B cell (primary cell): ENCODE measurements at regions of chr19 and their contacts with region 1.

Region 1: DNA sequence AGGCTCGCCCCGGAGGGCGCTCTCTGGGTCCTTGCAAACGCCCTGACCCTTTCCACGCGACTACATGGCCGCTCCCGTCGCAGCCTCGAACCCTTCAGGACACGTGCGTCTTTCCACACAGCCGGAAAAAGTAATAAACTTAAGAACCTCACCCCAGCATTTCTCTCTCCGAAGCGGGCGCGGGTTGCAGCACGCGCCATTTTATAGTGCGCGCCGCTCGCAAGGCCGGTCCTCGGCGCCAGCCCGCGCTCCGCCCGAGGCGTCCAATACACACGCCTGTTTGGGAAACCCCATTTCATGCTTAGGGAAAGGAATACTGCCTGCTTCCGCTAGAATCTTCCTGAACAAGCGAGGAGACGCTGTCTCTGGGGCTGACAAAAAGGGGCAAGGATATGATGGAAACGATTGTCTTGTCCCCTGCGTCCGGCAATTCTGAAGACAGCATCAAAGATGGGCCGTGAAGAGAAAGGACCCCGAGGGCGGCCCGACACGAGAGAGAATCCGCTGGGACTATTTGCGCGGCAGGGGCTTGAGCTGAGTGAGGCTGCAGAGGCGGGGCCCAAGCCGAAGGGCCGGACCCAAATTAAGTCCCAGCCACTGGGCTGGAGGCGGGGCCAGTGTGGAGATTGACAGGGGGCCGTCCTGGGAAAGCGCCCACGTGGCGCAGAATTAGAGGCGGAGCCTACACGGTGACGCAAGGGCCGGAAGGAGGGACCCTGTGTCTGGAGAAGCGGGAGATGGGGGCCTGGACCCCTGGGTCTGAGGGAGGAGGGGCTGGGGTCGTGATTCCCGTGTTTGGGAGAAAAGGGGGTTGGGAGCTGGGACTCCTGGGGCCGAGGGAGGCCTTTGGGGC is 14.4 kb downstream of the ACP4 start:
- DNase-seq: peak; percentile 99
- ATAC-seq: peak; percentile 98
- H3K4me3 ChIP-seq: peak overlapping the region; percentile 80 to 98 (median 88)
- H3K4me3 Mint-ChIP-seq: peak overlapping the region; percentile 94
- H3K27ac ChIP-seq: peak overlapping the region; percentile 99
- H3K27ac Mint-ChIP-seq: peak overlapping the region; percentile 100
- H3K4me1 ChIP-seq: peaks cover 18 to 24% of the 10 kb centered on the region in 2 donors
- H3K4me1 Mint-ChIP-seq: peaks cover 39% of the 10 kb centered on the region
- H3K27me3 ChIP-seq: no peaks in the 10 kb centered on the region
- H3K27me3 Mint-ChIP-seq: no peaks in the 10 kb centered on the region
- CTCF ChIP-seq: no peak

Region 2: DNA sequence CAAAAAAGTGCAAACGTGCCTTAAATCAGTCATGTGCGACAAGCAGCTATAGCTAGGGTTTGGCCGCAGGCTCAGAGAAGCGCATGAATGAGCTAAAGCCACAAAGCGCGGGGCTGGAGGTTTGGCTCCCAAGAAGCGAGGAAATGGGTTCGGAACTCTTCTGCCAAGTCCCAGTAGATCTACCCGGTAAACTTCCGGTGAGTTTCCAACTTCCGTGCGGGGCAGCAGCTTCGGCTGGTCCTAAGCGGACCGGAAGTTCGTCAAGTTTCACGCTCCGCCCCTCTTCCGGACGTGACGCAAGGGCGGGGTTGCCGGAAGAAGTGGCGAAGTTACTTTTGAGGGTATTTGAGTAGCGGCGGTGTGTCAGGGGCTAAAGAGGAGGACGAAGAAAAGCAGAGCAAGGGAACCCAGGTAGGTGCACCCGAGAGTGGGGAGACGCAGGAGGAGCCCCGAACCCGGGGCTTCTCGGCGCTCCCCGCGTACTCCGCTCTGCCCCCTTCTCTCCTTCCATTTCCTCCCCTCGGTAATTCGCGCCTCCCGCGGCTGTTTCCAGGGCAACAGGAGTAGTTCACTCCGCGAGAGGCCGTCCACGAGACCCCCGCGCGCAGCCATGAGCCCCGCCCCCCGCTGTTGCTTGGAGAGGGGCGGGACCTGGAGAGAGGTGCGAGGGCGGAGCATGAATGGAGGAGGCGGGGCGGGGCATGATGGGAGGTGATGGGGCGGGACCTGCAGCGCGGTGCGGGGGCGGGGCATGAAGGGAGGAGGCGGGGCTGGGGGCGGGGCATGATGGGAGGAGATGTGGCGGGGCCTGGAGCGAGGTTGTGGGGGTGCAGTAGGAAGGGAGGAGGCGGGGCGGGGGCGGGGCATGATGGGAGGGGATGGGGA is 428.2 kb before region 1 on chr19 and contains the start of gene NR1H2:
- CTCF ChIA-PET with region 1: no interaction called
- POLR2A ChIA-PET with region 1: no interaction called
- intact Hi-C with region 1: loop called (anchors 2 kb)
- DNase-seq: peak; percentile 99
- ATAC-seq: peak; percentile 87
- H3K4me3 ChIP-seq: peak within 1 kb of the TSS; percentile 30 to 98 (median 91)
- H3K4me3 Mint-ChIP-seq: peak within 1 kb of the TSS; percentile 97
- H3K27ac ChIP-seq: peak within 1 kb of the TSS; percentile 99 to 100
- H3K27ac Mint-ChIP-seq: peak within 1 kb of the TSS; percentile 99
- H3K4me1 ChIP-seq: peaks cover 6 to 14% of the 10 kb centered on the region in 2 donors
- H3K4me1 Mint-ChIP-seq: peaks cover 19% of the 10 kb centered on the region
- H3K27me3 ChIP-seq: no peaks in the 10 kb centered on the region
- H3K27me3 Mint-ChIP-seq: no peaks in the 10 kb centered on the region
- CTCF ChIP-seq: no peak
- total RNA-seq, gene NR1H2: 116 and 118 TPM in 2 replicates

Region 3: DNA sequence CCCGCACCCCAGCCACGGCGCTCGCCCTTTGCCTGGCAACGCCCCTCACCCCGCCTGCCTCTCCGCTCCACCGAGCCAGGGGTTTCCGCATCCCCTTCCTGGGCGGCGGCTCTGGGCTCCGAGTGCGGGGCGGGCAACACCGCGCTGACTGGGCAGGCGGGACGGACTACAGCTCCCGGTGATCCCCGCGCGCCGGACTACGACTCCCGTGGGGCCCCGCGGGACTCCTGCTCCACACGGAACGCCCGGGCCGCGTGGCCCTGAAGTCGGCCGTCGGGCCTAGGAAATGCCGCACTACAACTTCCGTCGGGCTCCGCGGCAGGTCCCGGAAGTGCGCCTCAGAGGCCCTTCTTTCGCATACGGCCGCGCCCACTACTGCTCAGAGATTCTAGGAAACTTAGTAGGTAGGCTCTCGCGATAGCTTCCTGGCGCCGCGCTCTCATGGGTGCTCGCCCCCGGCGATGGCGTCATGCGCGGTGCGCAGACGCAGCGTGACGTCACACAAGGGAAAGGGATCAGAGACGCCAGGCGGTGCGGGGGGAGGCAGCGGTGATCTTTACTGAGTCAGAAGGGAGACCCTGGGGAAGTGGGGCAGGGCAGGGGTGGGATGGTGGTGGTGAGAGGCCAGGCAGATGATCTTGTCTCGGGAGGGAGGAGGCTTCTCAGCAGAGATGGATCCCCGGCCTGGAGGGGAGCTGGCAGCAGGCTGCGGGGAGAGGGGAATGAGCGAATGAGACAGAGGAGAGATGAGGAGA is 293.4 kb before region 1 on chr19 and contains the start of gene JOSD2:
- CTCF ChIA-PET with region 1: no interaction called
- POLR2A ChIA-PET with region 1: interaction called, 4 read pairs
- intact Hi-C with region 1: loop called (anchors 1 kb)
- DNase-seq: peak; percentile 99
- ATAC-seq: peak; percentile 94
- H3K4me3 ChIP-seq: peak within 1 kb of the TSS; percentile 19 to 84 (median 62)
- H3K4me3 Mint-ChIP-seq: peak within 1 kb of the TSS; percentile 96
- H3K27ac ChIP-seq: peak within 1 kb of the TSS; percentile 87 to 98
- H3K27ac Mint-ChIP-seq: peak within 1 kb of the TSS; percentile 100
- H3K4me1 ChIP-seq: peaks cover 14 to 20% of the 10 kb centered on the region in 2 donors
- H3K4me1 Mint-ChIP-seq: peaks cover 17% of the 10 kb centered on the region
- H3K27me3 ChIP-seq: peaks cover 0 to 25% (median 2%) of the 10 kb centered on the region in 4 experiments
- H3K27me3 Mint-ChIP-seq: peaks cover 3% of the 10 kb centered on the region
- CTCF ChIP-seq: no peak
- total RNA-seq, gene JOSD2: 32.8 TPM in 2 replicates

Region 4: GRCh38 chr19:50764409-50764808 is 40.2 kb before region 1 on chr19:
- CTCF ChIA-PET with region 1: no interaction called
- POLR2A ChIA-PET with region 1: no interaction called
- intact Hi-C with region 1: no loop called
- DNase-seq: no peak
- ATAC-seq: no peak
- H3K4me3 ChIP-seq: no peak overlapping the region
- H3K4me3 Mint-ChIP-seq: no peak overlapping the region
- H3K27ac ChIP-seq: no peak overlapping the region
- H3K27ac Mint-ChIP-seq: no peak overlapping the region
- H3K4me1 ChIP-seq: no peaks in the 10 kb centered on the region
- H3K4me1 Mint-ChIP-seq: no peaks in the 10 kb centered on the region
- H3K27me3 ChIP-seq: no peaks in the 10 kb centered on the region
- H3K27me3 Mint-ChIP-seq: peaks cover 20% of the 10 kb centered on the region
- CTCF ChIP-seq: no peak

Region 5: DNA sequence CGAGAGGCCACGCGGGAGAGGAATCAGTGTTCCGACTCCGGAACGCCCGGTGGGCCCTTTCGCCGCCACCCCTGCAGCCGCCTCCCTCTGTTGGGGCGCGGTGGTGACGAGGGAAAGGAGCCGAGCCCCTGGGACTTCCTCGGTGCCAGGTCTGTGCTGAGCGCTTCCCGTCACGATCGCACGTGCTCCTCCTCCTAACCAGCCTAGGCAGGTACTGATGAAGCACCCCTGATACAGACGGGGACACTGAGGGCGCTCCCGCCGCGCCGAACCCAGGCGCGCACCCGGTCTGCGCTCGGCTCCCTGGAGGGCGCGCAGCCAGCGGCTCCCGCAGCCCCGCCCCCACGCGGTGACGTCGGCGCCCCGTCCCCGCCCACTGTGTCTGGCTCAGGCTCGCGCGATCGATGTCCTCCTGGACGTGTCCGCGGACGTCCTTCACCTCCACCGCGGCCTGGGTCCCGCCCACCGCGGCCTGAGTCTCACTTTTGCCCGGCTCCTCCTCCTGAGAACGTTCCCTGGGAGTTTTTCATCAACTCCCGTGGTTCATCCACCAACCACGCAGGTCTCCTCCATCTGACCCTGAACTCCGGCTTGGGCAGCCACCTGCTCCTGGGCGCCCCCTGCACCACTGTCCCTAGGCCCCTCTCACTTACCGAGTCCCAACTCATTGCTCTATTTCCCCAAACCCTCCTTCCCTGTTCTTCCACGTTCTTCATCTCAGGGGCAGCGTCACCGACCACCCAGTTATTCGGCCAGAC is 31.3 kb after region 1 on chr19:
- CTCF ChIA-PET with region 1: no interaction called
- POLR2A ChIA-PET with region 1: no interaction called
- intact Hi-C with region 1: loop called (anchors 2 kb)
- DNase-seq: peak; percentile 84
- ATAC-seq: peak; percentile 94
- H3K4me3 ChIP-seq: peak overlapping the region in 4 of 5 experiments; percentile 51 to 67 (median 59)
- H3K4me3 Mint-ChIP-seq: peak overlapping the region; percentile 88
- H3K27ac ChIP-seq: no peak overlapping the region
- H3K27ac Mint-ChIP-seq: peak overlapping the region; percentile 73
- H3K4me1 ChIP-seq: peaks cover 11 to 14% of the 10 kb centered on the region in 2 donors
- H3K4me1 Mint-ChIP-seq: peaks cover 26% of the 10 kb centered on the region
- H3K27me3 ChIP-seq: peaks cover 0 to 48% (median 2%) of the 10 kb centered on the region in 4 experiments
- H3K27me3 Mint-ChIP-seq: peaks cover 45% of the 10 kb centered on the region
- CTCF ChIP-seq: no peak